Left cardiac atrium (tissue), 4 donors: ENCODE measurements at regions of chr19 and their contacts with region 1.

Region 1: DNA sequence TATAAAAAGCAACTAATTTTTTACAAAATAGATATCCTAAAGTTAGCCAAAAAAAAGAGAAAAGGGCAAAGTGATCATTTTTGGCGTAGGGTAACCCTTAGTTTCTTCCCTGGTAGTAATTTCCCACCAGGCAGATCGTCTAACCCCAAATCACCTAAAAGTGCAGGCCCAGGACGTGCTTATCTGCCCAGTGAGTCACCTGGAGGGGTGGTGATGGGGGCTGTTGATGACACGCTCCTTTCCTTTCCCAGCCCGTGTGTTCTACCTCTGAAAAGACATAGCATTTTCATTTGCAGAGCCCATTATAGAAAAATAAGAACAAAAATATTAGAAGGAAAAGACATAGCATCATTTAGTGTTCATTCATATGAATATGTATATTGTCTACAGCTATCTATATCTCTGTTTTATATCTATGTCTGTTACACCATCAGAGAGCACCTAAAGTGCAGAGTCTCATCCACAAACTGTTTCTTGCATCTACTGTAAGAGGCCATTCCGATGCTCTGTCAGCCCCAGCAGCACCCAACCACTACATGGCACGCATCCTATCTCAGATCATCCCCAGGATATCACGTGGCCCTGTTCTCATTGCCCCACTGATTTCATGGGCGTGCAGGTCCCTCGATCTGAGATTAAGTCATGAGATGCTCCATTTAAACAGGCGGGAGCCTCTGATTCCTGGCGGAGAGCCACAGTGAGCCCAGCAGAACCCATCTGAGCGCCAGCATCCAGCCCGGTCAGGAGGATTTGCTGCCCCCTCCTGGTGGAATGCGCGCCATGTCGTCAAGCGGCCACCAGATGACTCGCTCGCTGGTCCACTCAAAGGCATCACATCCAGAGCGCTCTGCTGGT is 8.5 kb upstream of the LILRB3 start:
- DNase-seq: peak; percentile 93
- ATAC-seq: peak; percentile 89 to 95

Region 2: DNA sequence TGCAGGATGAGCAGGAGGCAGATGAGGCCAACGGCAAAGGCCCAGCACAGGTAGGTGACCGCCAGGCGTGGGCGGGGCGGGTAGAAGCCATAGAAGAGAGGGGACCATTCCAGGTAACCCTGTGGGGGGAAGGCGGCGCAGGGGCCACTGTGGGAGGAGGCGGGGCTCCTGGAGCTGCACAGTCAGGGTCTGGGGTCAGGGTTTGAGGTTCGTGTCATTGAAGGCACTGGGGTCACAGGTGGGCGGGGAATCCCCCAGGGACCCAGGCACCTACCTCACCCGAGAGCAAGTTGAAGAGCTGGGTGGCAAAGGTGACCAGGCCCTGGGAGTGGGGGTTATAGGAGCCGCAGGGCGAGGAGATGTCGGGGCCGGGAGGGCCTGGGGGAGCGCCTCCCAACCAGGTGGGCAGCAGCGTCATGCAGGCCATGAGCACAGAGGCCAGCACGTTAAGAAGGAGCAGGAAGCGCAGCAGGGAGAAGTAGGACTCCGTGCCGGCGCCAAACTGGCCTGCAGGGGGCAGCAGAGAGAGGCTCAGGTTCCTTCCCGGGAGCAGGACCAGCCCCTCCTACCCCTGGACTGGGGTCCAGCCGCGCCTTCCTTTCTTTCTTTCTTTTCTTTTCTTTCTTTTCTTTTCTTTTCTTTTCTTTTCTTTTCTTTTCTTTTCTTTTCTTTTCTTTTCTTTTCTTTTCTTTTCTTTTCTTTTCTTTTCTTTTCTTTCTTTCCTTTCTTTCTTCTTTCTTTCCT is 63.0 kb before region 1 on chr19:
- intact Hi-C with region 1: loop called (anchors 1 to 5 kb)
- DNase-seq: peak; percentile 92
- ATAC-seq: peak; percentile 83 to 91